ENCODE measurements at regions of chr3 and their contacts with region 1.

Region 1: GRCh38 chr3:126083913-126084767 is at the start of gene SLC41A3:
- DNase-seq: peak; percentile 97
- H3K4me3 Mint-ChIP-seq: peak within 1 kb of the TSS; percentile 85
- H3K27ac Mint-ChIP-seq: peak within 1 kb of the TSS; percentile 87
- H3K4me1 Mint-ChIP-seq: peaks cover 15% of the 10 kb centered on the region
- H3K27me3 Mint-ChIP-seq: no peaks in the 10 kb centered on the region
- total RNA-seq, gene SLC41A3: 17.9 and 20.1 TPM in 2 replicates

Region 2: DNA sequence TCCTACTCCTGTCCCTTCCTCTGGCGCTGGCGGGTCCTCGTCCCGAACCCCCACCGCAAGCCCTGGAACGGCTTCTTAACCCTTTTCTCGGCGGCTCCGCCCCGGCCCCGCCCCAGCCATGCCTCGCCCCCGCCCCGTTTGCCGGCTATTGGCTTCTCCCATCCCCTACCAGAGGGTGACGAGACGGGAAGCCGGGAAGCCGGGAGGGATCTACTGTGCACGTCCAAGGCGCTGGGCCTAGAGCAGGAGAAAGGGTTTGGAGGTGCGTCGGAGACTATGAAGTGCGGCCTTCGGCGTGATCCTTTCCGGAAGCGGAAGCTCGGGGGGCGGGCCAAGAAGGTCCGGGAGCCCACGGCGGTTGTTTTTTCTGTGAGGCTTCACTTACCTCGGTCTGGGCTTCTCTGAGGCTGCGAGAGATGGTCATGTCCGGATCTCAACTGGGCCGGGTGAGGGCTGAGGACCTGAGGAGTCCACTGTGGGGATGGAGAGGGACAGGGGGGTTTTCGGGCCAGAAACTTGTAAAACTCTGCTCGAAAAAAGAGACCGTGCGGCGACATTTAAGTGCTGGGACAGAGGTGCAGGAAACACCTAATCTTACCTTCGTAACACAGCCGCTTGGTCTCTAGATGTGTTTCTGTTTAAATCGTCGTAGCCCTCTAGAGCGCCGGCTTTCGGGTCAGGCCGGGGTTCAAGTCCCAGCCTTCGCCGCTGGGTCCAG is 93.7 kb before region 1 on chr3:
- intact Hi-C with region 1: loop called (anchors 1 kb)
- DNase-seq: peak; percentile 93
- H3K4me3 Mint-ChIP-seq: peak overlapping the region; percentile 93
- H3K27ac Mint-ChIP-seq: peak overlapping the region; percentile 93
- H3K4me1 Mint-ChIP-seq: peaks cover 7% of the 10 kb centered on the region
- H3K27me3 Mint-ChIP-seq: peaks cover 12% of the 10 kb centered on the region

Region 3: DNA sequence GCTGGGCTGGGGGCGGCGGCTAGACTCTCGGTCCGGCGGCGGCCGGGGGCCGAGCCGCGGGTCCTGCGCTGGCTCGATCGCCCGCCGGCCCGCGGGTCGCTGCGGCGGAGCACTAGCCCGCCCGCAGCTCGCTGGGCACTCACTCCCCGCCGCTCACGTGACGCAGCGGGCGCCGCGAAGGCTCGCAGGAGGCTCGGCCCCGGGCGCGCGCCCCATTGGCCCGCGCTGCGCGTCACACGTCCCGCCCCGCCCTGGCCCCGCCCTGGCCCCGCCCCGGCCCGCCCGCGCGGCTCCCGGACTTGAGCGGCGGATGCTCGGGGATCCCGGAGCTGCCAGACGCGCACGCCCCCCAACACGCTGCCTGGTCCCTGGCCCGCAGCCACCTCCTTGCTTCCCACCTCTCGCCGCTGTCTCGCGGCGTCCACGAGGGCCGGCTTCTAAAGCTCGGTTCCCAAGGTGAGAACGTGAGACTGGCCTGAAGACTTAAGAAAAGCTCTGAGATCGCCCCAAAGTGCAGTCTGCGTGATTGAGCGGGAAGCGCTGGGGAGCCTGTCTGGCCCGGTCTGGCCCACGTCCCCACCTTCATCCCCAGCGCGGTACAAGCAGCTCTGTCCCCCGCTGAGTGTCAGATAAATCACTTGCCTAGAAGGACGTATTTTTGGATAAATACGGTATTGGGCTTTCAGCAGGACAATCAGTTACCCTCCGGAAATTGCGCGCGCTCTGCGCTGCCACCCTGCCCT is 273.3 kb after region 1 on chr3 and contains the start of gene KLF15:
- intact Hi-C with region 1: loop called (anchors 5 kb)
- DNase-seq: peak; percentile 93
- H3K4me3 Mint-ChIP-seq: peak within 1 kb of the TSS; percentile 86
- H3K27ac Mint-ChIP-seq: peak within 1 kb of the TSS; percentile 62
- H3K4me1 Mint-ChIP-seq: peaks cover 7% of the 10 kb centered on the region
- H3K27me3 Mint-ChIP-seq: peaks cover 44% of the 10 kb centered on the region
- total RNA-seq, gene KLF15: 0.19 and 0.28 TPM in 2 replicates

Measured in activated CD4-positive, alpha-beta T cell treated with anti-CD3 and anti-CD28 coated beads, Interleukin-2, amount 10 ng/mL, durations not matched to agents 24 days and 14 days (primary cell).